PC-9 (cell line): ENCODE measurements at regions of chr15 and their contacts with region 1.

Region 1: DNA sequence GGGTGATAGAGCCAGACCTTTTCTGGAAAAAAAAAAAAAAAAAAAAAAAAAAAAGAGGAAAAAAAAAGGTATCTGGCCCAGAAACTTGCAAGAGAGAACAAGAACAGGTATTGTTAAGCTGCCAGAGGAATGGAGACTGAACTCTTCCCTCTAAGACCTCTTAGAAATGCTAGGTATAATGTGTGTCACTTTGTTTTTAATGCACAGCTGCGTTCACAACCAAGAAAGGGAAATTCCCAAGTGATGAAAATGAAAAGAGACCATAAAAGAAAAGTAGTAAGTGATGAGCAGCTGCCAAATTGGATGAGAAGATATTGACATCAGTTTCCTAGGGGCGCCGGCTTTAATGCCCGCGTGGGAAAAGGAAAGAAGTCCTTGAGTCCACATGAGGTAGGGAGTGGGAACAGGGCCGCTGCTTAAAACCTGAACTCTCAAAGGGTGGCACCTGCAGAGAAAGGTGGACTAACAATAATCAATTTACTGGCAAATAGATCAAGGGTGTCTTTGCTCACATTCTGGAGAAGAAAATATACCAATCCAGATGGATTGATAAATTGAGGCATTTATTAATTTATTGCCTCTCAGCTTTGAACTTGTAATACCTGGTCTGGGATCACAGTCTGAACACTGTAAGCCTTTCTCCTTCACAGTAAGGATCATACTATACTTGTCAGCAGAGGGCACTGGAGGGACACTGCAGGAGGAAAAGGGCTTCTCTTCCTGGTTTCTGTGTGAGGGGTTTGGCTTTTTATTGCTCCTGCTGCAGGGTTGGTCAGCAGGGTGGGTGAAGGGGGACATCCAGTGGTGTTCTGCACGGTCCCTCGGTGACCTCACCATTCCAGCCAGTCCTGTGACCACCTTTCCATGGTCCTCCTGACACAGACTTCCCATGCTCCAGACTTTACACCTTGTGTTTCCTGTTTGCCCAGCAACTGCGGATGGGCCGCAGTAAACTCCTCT is 131.6 kb downstream of the AQP9 start:
- DNase-seq: peak; percentile 44 to 62
- H3K4me3 ChIP-seq: no peak overlapping the region
- H3K27ac ChIP-seq: peak overlapping the region; percentile 39
- H3K4me1 ChIP-seq: peaks cover 34% of the 10 kb centered on the region
- H3K27me3 ChIP-seq: no peaks in the 10 kb centered on the region
- CTCF ChIP-seq: peak; percentile 74

Region 2: GRCh38 chr15:57861036-57861638 is 408.6 kb before region 1 on chr15:
- CTCF ChIA-PET with region 1: no interaction called
- POLR2A ChIA-PET with region 1: no interaction called
- intact Hi-C with region 1: no loop called
- DNase-seq: peak; percentile 6 to 36
- H3K4me3 ChIP-seq: no peak overlapping the region
- H3K27ac ChIP-seq: no peak overlapping the region
- H3K4me1 ChIP-seq: no peaks in the 10 kb centered on the region
- H3K27me3 ChIP-seq: no peaks in the 10 kb centered on the region
- CTCF ChIP-seq: peak; percentile 82

Region 3: GRCh38 chr15:58212909-58213526 is 56.7 kb before region 1 on chr15:
- CTCF ChIA-PET with region 1: no interaction called
- POLR2A ChIA-PET with region 1: no interaction called
- intact Hi-C with region 1: no loop called
- DNase-seq: no peak
- H3K4me3 ChIP-seq: no peak overlapping the region
- H3K27ac ChIP-seq: no peak overlapping the region
- H3K4me1 ChIP-seq: no peaks in the 10 kb centered on the region
- H3K27me3 ChIP-seq: no peaks in the 10 kb centered on the region
- CTCF ChIP-seq: peak; percentile 67

Region 4: GRCh38 chr15:58247855-58248766 is 21.6 kb before region 1 on chr15:
- CTCF ChIA-PET with region 1: interaction called, 10 read pairs
- POLR2A ChIA-PET with region 1: no interaction called
- intact Hi-C with region 1: no loop called
- DNase-seq: no peak
- H3K4me3 ChIP-seq: no peak overlapping the region
- H3K27ac ChIP-seq: no peak overlapping the region
- H3K4me1 ChIP-seq: no peaks in the 10 kb centered on the region; the same call in 1 of the 2 replicates
- H3K27me3 ChIP-seq: no peaks in the 10 kb centered on the region
- CTCF ChIP-seq: no peak

Region 5: GRCh38 chr15:58346389-58346788 is 76.7 kb after region 1 on chr15:
- CTCF ChIA-PET with region 1: no interaction called
- POLR2A ChIA-PET with region 1: interaction called, 29 read pairs
- intact Hi-C with region 1: no loop called
- DNase-seq: peak; percentile 84 to 91
- H3K4me3 ChIP-seq: no peak overlapping the region
- H3K27ac ChIP-seq: peak overlapping the region; percentile 51
- H3K4me1 ChIP-seq: peaks cover 23% of the 10 kb centered on the region
- H3K27me3 ChIP-seq: no peaks in the 10 kb centered on the region
- CTCF ChIP-seq: no peak